Right lobe of liver (tissue), 6 donors: ENCODE measurements at regions of chr1 and their contacts with region 1.

Region 1: DNA sequence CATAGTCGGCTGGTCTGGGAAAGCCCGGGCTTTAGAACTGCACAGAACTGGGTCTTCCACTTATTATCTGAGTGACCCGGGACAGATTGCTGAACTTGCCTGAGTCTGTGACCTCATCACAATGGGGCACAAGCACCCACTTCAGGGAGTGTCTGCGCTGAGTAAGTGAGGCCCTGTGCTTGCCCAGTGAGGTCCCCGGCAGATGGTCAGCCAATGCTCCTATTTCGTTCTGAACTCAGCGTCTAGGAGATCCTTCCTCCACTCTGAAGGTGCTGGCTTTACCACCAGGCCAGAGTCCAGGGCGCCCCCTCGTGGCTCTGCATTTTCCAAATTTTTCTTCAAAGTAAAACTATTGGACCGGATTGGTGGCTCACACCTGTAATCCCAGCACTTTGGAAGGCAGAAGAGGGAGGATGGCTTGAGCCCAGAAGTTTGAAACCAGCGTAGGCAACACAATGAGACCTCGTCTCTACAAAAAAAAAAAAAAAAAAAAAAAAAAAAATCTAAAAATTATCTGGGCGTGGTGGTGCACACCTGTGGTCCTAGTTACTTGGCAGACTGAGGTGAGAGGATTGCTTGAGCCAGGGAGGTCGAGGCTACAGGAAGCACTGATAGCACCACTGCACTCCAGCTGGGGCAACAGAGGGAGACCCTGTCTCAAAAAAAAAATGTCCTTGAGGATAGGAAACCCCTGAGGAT is 61.7 kb downstream of the FCRL5 start:
- DNase-seq: peak; percentile 66 to 69 (median 68)
- ATAC-seq: peak; percentile 66 to 85 (median 80)
- H3K4me3 ChIP-seq: no peak overlapping the region
- H3K27ac ChIP-seq: no peak overlapping the region
- H3K4me1 ChIP-seq: no peaks in the 10 kb centered on the region
- H3K27me3 ChIP-seq: no peaks in the 10 kb centered on the region
- CTCF ChIP-seq: peak; percentile 53 to 69 (median 58)
- POLR2A ChIP-seq: no peak

Region 2: DNA sequence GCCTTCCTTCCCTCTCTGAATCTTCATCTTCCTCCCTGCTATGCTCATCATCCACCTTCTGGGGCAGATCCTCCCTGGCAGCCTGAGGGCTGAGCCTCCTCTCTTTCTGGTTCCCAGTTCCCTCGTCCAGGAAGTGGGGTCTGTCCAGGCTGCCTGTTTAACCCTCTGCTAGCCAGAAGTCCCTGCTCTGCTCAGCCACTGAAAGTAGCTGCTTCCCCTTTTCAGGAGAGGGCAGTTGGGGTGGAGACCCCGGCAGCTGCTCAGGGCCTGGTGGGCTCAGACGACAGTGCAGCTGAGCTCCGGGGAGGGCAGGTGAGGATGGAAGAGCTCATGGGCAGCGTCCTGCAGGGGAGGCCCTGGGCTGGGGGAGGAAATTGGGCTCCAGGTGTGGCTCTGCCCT is 309.4 kb before region 1 on chr1:
- intact Hi-C with region 1: loop called in 1 of 2 experiments (anchors 10 kb)
- DNase-seq: no peak
- ATAC-seq: no peak
- H3K4me3 ChIP-seq: no peak overlapping the region
- H3K27ac ChIP-seq: no peak overlapping the region
- H3K4me1 ChIP-seq: peaks cover 0 to 7% (median 0%) of the 10 kb centered on the region in 4 donors
- H3K27me3 ChIP-seq: no peaks in the 10 kb centered on the region
- CTCF ChIP-seq: no peak
- POLR2A ChIP-seq: no peak

Region 3: DNA sequence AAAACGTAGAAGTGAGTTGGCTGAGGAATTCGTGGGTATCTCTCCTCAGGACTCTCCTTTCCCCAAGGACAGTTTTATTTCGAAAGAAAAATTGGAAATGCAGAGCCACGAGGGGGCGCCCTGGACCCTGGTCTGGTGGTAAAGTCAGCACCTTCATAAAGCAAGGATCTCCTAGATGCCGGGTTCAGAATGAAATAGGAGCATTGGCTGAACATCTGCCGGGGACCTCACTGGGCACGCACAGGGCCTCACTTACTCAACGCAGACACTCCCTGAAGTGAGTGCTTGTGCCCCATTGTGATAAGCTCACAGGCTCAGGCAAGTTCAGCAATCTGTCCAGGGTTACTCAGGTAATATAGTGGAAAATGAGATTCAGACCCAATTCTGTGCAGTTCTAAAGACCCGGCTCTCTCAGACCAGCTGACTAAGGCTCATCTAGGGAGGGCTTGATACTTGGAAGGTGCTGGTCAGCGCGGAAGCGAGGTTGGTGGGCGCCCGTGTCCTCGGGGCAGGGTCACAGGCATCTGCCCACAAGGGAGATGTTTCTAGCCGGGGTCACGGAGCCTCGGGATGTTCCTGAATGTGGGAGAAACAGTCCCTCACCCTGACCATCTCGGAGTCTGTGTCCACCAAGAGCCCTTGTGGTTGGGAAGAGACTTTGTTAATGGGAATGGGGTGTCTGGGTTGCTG is 296.8 kb before region 1 on chr1:
- intact Hi-C with region 1: loop called (anchors 10 kb)
- DNase-seq: peak in 2 of 3 donors; percentile 59 to 68
- ATAC-seq: peak; percentile 52 to 74 (median 70)
- H3K4me3 ChIP-seq: no peak overlapping the region
- H3K27ac ChIP-seq: no peak overlapping the region
- H3K4me1 ChIP-seq: no peaks in the 10 kb centered on the region
- H3K27me3 ChIP-seq: peaks cover 0 to 8% of the 10 kb centered on the region in 2 donors
- CTCF ChIP-seq: peak; percentile 54 to 76 (median 70)
- POLR2A ChIP-seq: no peak

Region 4: GRCh38 chr1:157369808-157370521 is 120.7 kb before region 1 on chr1:
- intact Hi-C with region 1: loop called (anchors 5 kb)
- DNase-seq: peak in 1 of 3 donors; percentile 55
- ATAC-seq: peak; percentile 95 to 99 (median 97)
- H3K4me3 ChIP-seq: no peak overlapping the region
- H3K27ac ChIP-seq: no peak overlapping the region
- H3K4me1 ChIP-seq: no peaks in the 10 kb centered on the region
- H3K27me3 ChIP-seq: no peaks in the 10 kb centered on the region
- CTCF ChIP-seq: peak; percentile 91 to 96 (median 94)
- POLR2A ChIP-seq: no peak

Region 5: GRCh38 chr1:157542676-157543075 is 52.1 kb after region 1 on chr1:
- intact Hi-C with region 1: no loop called
- DNase-seq: no peak
- ATAC-seq: peak in 1 of 4 donors; percentile 13
- H3K4me3 ChIP-seq: no peak overlapping the region
- H3K27ac ChIP-seq: no peak overlapping the region
- H3K4me1 ChIP-seq: no peaks in the 10 kb centered on the region
- H3K27me3 ChIP-seq: no peaks in the 10 kb centered on the region
- CTCF ChIP-seq: no peak
- POLR2A ChIP-seq: no peak